Activated CD4-positive, alpha-beta T cell treated with anti-CD3 and anti-CD28 coated beads, Interleukin-2, amount 10 ng/mL, durations not matched to agents 24 days and 14 days (primary cell): ENCODE measurements at regions of chrX and their contacts with region 1.

Region 1: DNA sequence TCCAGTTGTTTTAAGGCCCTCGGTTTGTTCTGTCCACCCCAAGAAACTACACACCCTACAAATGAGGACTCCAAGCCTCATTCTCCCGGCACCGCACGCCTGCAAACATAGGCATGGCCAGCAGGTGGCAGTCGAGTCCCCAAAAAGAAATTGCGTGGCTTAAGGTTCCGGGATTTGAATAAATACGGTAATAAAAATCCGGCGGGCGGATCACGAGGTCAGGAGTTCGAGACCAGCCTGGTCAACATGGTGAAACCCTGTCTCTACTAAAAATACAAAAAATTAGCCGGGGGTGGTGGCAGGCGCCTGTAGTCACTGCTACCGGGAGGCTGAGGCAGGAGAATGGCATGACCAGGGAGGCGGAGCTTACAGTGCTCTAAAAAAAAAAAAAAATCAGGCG is 21.8 kb upstream of the CSF2RA start:
- DNase-seq: peak; percentile 96
- H3K4me3 Mint-ChIP-seq: peak overlapping the region; percentile 49
- H3K27ac Mint-ChIP-seq: peak overlapping the region; percentile 71
- H3K4me1 Mint-ChIP-seq: peaks cover 32% of the 10 kb centered on the region
- H3K27me3 Mint-ChIP-seq: no peaks in the 10 kb centered on the region

Region 2: DNA sequence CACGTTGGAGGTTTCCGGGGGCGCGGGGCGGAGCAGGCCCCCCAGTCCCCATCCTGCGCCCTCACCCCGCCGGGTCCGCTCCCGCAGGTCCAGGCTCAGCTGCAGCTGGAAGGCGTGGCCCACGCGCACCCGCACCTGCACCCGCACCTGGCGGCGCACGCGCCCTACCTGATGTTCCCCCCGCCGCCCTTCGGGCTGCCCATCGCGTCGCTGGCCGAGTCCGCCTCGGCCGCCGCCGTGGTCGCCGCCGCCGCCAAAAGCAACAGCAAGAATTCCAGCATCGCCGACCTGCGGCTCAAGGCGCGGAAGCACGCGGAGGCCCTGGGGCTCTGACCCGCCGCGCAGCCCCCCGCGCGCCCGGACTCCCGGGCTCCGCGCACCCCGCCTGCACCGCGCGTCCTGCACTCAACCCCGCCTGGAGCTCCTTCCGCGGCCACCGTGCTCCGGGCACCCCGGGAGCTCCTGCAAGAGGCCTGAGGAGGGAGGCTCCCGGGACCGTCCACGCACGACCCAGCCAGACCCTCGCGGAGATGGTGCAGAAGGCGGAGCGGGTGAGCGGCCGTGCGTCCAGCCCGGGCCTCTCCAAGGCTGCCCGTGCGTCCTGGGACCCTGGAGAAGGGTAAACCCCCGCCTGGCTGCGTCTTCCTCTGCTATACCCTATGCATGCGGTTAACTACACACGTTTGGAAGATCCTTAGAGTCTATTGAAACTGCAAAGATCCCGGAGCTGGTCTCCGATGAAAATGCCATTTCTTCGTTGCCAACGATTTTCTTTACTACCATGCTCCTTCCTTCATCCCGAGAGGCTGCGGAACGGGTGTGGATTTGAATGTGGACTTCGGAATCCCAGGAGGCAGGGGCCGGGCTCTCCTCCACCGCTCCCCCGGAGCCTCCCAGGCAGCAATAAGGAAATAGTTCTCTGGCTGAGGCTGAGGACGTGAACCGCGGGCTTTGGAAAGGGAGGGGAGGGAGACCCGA is 602.2 kb before region 1 on chrX:
- intact Hi-C with region 1: no loop called
- DNase-seq: peak; percentile 49
- H3K4me3 Mint-ChIP-seq: no peak overlapping the region
- H3K27ac Mint-ChIP-seq: no peak overlapping the region
- H3K4me1 Mint-ChIP-seq: no peaks in the 10 kb centered on the region
- H3K27me3 Mint-ChIP-seq: peaks cover 11% of the 10 kb centered on the region

Region 3: DNA sequence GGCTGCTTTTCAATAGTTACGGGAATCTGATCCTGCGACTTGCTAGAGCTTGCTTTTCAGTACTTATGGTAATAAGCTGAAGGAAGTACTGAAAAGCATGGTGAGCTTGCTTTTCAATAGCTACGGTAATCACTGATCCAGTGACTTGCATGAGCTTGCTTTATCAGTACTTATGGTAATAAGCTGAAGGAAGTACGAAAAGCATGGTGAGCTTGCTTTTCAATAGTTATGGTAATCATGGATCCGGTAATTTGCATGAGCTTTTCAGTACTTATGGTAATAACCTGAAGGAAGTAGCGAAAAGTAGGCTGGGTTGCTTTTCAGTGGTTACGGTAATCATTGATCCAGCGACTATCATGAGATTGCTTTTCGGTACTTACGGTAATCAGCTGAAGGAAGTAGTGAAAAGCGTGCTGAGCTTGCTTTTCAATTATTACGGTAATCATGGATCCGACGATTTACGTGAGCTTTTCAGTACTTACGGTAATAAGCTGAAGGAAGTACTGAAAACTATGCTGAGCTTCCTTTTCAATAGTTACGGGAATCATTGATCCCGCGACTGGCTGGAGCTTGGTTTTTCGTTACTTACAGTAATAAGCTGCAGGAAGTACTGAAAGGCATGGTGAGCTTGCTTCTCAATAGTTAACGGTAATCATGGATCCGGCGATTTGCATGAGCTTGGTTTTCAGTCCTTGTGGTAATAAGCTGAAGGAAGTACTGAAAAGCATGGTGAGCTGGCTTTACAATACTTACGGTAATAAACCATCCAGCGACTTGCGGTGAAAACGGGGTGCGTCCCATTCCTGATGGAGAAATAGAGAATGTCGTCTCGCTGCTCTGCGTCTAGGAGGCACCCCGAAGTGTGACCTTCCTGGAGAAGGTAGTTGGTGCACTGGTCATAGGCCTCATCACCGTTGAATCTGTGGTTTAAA is 40.9 kb before region 1 on chrX:
- intact Hi-C with region 1: loop called (anchors 1 kb)
- DNase-seq: peak; percentile 82
- H3K4me3 Mint-ChIP-seq: peak overlapping the region; percentile 77
- H3K27ac Mint-ChIP-seq: peak overlapping the region; percentile 35
- H3K4me1 Mint-ChIP-seq: peaks cover 33% of the 10 kb centered on the region
- H3K27me3 Mint-ChIP-seq: peaks cover 2% of the 10 kb centered on the region

Region 4: GRCh38 chrX:1323315-1323714 is 76.5 kb after region 1 on chrX:
- intact Hi-C with region 1: loop called (anchors 2 kb)
- DNase-seq: peak; percentile 86
- H3K4me3 Mint-ChIP-seq: peak overlapping the region; percentile 10
- H3K27ac Mint-ChIP-seq: peak overlapping the region; percentile 66
- H3K4me1 Mint-ChIP-seq: peaks cover 16% of the 10 kb centered on the region
- H3K27me3 Mint-ChIP-seq: peaks cover 2% of the 10 kb centered on the region

Region 5: DNA sequence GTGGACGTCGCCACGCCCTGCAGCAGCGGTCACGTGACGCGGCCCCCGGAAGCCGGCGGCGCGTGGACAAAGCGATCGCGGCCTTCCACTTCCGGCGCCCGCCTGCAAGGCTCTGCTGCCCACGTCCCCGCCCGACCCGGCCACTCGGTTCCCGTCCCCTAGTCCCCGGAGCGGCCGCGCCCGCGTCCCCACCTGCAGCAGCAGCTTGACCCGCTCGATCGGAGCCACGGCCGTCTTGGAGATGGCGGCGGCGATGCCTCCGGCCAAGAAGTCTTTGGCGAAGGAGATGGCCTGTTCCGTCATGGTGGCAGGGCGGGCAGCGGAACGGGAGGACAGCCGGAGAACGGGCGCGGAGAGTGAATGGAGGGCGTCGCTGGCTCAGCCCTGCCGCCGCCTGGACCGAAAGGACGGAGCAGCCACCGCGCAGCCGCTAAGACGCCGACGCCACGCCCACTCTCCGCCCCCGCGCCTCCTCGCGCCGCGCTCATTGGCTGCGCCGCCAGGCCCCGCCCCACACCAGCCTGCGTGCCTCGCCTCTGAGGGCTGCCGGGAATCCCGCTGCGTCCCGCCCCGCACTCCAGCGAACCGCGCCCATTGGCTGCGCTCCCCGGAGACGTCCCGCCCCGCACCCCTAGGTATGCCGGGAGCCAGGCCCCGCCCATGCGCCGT is 145.0 kb after region 1 on chrX and contains the start of gene SLC25A6:
- intact Hi-C with region 1: loop called (anchors 1 kb)
- DNase-seq: peak; percentile 100
- H3K4me3 Mint-ChIP-seq: peak within 1 kb of the TSS; percentile 97
- H3K27ac Mint-ChIP-seq: peak within 1 kb of the TSS; percentile 98
- H3K4me1 Mint-ChIP-seq: peaks cover 36% of the 10 kb centered on the region
- H3K27me3 Mint-ChIP-seq: no peaks in the 10 kb centered on the region
- total RNA-seq, gene SLC25A6: 302 and 306 TPM in 2 replicates

Region 6: GRCh38 chrX:1591102-1591900 is 344.5 kb after region 1 on chrX and contains the start of gene AKAP17A:
- intact Hi-C with region 1: loop called (anchors 5 kb)
- DNase-seq: peak; percentile 100
- H3K4me3 Mint-ChIP-seq: peak within 1 kb of the TSS; percentile 97
- H3K27ac Mint-ChIP-seq: peak within 1 kb of the TSS; percentile 93
- H3K4me1 Mint-ChIP-seq: peaks cover 22% of the 10 kb centered on the region
- H3K27me3 Mint-ChIP-seq: no peaks in the 10 kb centered on the region
- total RNA-seq, gene AKAP17A: 59.6 and 62.0 TPM in 2 replicates

Region 7: DNA sequence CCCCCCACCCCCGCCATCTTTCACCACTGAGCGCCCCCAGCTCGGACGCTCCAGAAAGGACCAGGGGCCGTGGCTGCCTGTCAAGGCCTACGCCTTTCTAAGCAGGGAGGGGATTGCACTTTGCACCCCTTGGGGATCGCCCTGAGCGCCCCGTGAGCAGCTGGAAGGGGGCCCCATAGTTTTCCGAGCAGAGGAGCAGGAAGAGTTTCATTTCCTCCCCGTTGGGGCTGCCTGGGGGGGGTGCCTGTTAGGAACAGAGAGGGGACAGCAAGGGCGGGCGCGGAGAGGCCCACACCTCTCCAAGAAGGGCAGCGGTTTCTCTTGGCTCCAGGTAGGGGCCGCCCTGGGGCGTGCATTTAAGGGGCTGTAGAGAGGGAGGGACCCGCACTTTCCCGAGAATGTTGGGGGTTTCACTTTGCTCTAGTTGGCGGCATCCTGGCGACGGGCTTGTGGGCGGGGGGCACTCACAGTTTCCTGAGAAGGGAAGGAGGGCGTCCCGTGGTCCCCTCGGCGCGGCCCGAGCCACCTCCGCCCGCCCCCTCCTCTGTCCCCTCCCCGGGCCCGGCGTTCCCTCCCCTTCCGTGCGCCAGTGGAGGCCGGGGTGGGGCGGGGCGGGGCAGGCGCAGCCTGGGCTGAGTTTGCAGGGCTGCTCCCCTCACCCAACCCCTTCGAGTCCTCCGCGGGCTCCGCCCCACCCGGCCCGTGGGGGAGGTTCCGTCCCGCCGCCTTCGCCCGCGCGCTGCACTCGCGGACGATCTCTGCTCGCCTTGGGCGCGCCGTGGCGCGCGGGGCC is 1362.0 kb after region 1 on chrX:
- intact Hi-C with region 1: loop called (anchors 10 kb)
- DNase-seq: peak; percentile 97
- H3K4me3 Mint-ChIP-seq: peak overlapping the region; percentile 95
- H3K27ac Mint-ChIP-seq: peak overlapping the region; percentile 93
- H3K4me1 Mint-ChIP-seq: peaks cover 46% of the 10 kb centered on the region
- H3K27me3 Mint-ChIP-seq: no peaks in the 10 kb centered on the region